MCF 10A (cell line): ENCODE measurements at regions of chr11 and their contacts with region 1.

Region 1: GRCh38 chr11:95705485-95706124 is 84.0 kb downstream of the FAM76B start:
- DNase-seq: peak; percentile 83
- H3K4me3 Mint-ChIP-seq: no peak overlapping the region
- H3K27ac Mint-ChIP-seq: no peak overlapping the region
- H3K4me1 Mint-ChIP-seq: peaks cover 6% of the 10 kb centered on the region
- H3K27me3 Mint-ChIP-seq: no peaks in the 10 kb centered on the region
- CTCF ChIP-seq: peak; percentile 96

Region 2: GRCh38 chr11:95521133-95521542 is 184.5 kb before region 1 on chr11:
- CTCF ChIA-PET with region 1: interaction called, 10 read pairs
- POLR2A ChIA-PET with region 1: no interaction called
- intact Hi-C with region 1: loop called (anchors 5 kb)
- DNase-seq: peak; percentile 89
- H3K4me3 Mint-ChIP-seq: no peak overlapping the region
- H3K27ac Mint-ChIP-seq: peak overlapping the region; percentile 50
- H3K4me1 Mint-ChIP-seq: peaks cover 32% of the 10 kb centered on the region
- H3K27me3 Mint-ChIP-seq: no peaks in the 10 kb centered on the region
- CTCF ChIP-seq: no peak

Region 3: GRCh38 chr11:95715777-95716241 is 10.2 kb after region 1 on chr11:
- CTCF ChIA-PET with region 1: interaction called, 18 read pairs
- POLR2A ChIA-PET with region 1: no interaction called
- intact Hi-C with region 1: no loop called
- DNase-seq: peak; percentile 23
- H3K4me3 Mint-ChIP-seq: no peak overlapping the region
- H3K27ac Mint-ChIP-seq: no peak overlapping the region
- H3K4me1 Mint-ChIP-seq: peaks cover 7% of the 10 kb centered on the region
- H3K27me3 Mint-ChIP-seq: no peaks in the 10 kb centered on the region
- CTCF ChIP-seq: no peak

Region 4: GRCh38 chr11:95734009-95734572 is 28.5 kb after region 1 on chr11:
- CTCF ChIA-PET with region 1: interaction called, 11 read pairs
- POLR2A ChIA-PET with region 1: interaction called, 4 read pairs
- intact Hi-C with region 1: no loop called
- DNase-seq: no peak
- H3K4me3 Mint-ChIP-seq: no peak overlapping the region
- H3K27ac Mint-ChIP-seq: peak overlapping the region; percentile 0
- H3K4me1 Mint-ChIP-seq: no peaks in the 10 kb centered on the region
- H3K27me3 Mint-ChIP-seq: peaks cover 11% of the 10 kb centered on the region
- CTCF ChIP-seq: no peak

Region 5: GRCh38 chr11:95764267-95764898 is 58.8 kb after region 1 on chr11:
- CTCF ChIA-PET with region 1: interaction called, 22 read pairs
- POLR2A ChIA-PET with region 1: interaction called, 3 read pairs
- intact Hi-C with region 1: loop called (anchors 1 kb)
- DNase-seq: peak; percentile 54
- H3K4me3 Mint-ChIP-seq: no peak overlapping the region
- H3K27ac Mint-ChIP-seq: no peak overlapping the region
- H3K4me1 Mint-ChIP-seq: peaks cover 10% of the 10 kb centered on the region
- H3K27me3 Mint-ChIP-seq: no peaks in the 10 kb centered on the region
- CTCF ChIP-seq: peak; percentile 61

Region 6: GRCh38 chr11:96424693-96425092 is 719.1 kb after region 1 on chr11:
- CTCF ChIA-PET with region 1: no interaction called
- POLR2A ChIA-PET with region 1: no interaction called
- intact Hi-C with region 1: loop called (anchors 2 kb)
- DNase-seq: peak; percentile 4
- H3K4me3 Mint-ChIP-seq: no peak overlapping the region
- H3K27ac Mint-ChIP-seq: no peak overlapping the region
- H3K4me1 Mint-ChIP-seq: no peaks in the 10 kb centered on the region
- H3K27me3 Mint-ChIP-seq: peaks cover 80% of the 10 kb centered on the region
- CTCF ChIP-seq: no peak